GM10248 (cell line): ENCODE measurements at regions of chr2 and their contacts with region 1.

Region 1: DNA sequence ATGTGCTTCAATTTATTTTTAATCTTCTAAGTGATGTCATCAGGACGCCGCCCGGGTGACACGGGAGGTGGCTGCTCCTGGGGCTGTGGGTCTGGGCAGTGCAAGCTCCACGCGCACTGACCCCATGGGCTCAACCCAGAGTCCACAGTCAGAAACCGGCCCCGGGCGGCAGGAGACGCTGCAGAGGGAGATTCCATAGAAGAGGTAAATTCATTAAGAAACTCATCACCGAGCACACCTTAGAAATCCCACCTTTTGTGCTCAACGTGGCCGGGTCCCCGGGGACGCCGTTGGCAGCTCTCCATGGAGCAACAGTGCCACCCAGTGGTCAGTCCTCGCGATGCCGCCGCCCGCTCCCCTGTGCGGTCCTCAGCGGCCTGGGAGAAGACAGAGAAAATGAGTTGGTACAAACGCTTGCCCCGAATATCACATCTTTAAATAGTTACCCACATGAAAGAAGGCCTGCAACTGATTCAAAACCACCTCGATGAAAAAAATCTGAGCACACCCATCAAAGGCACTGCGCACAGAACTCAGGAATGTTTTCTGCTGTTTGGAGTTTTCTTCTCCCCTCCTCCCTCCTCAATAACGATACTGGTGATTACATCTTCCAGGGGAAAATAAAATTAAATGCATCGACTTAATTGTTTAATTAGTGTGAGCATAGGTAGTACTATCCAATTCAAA is 92.6 kb downstream of the CMPK2 start:
- DNase-seq: peak; percentile 76
- CTCF ChIP-seq: peak; percentile 98

Region 2: GRCh38 chr2:6760091-6760490 is 13.1 kb before region 1 on chr2:
- CTCF ChIA-PET with region 1: interaction called, 11 read pairs
- POLR2A ChIA-PET with region 1: no interaction called
- DNase-seq: no peak
- CTCF ChIP-seq: no peak